ENCODE measurements at regions of chr3 and their contacts with region 1.

Region 1: DNA sequence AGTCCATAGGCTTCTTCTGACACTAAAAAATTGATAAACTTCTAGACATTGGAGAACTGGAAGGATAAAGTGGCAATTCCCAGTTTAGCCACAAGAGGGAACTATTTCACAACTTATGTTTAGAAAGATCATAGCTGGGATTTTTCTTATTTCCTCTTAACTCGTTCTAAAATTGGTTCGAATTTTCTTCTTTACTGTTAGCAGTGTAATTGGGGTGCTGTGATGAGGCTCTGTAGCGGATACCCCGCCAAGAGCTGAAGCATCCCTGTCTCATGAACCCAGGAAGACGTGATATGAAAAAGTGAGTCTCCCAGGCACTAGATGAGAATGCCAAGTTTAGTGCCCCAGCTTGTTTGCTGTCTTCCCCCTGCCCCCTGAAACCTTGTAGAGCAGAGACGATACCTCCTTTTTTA is 85.1 kb downstream of the PDCD6IP start:
- DNase-seq: no peak
- ATAC-seq: peak; percentile 27
- H3K4me3 Mint-ChIP-seq: peak overlapping the region; percentile 62
- H3K27ac Mint-ChIP-seq: no peak overlapping the region
- H3K4me1 Mint-ChIP-seq: peaks cover 36% of the 10 kb centered on the region
- H3K27me3 Mint-ChIP-seq: no peaks in the 10 kb centered on the region
- CTCF ChIP-seq: peak; percentile 72

Region 2: DNA sequence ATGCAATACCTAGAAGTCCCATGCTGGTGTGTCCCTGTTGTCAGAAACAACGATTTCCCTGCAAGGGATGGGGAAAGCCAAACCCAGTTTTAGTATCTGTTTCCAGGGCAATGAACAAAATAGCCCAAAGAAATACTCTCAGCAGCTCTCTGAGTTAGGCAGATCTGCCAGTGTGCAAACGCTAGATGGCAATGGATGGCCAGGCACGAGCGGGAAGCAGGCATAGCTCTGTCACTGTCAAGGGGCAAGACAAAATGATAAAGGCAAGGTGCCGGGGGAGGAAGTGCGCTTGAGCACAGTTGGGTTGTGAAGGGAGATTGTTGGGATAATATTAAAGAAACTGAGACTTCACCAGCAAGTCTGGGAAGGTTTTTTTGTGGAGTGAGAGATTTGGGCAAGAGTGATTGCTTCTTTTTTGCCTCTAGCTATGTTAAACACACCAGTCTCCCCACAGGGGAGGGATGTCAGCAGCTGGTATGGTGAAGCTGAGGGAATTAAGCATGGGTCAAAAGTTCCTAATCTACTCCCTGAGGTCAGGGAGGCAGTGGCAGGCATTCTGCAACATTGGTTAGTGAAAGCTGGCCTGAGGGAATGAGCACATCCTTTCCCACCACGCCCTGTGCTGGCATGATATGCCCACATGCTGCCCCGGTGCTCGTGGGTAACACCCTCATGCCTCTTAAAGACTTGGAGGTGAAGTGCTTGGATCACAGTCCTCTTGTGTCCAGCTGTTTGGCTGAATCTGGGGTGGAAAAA is 32.4 kb after region 1 on chr3:
- CTCF ChIA-PET with region 1: interaction called, 30 read pairs
- POLR2A ChIA-PET with region 1: no interaction called
- DNase-seq: peak; percentile 25
- ATAC-seq: peak; percentile 73
- H3K4me3 Mint-ChIP-seq: no peak overlapping the region
- H3K27ac Mint-ChIP-seq: no peak overlapping the region
- H3K4me1 Mint-ChIP-seq: peaks cover 17% of the 10 kb centered on the region
- H3K27me3 Mint-ChIP-seq: no peaks in the 10 kb centered on the region
- CTCF ChIP-seq: no peak

Region 3: DNA sequence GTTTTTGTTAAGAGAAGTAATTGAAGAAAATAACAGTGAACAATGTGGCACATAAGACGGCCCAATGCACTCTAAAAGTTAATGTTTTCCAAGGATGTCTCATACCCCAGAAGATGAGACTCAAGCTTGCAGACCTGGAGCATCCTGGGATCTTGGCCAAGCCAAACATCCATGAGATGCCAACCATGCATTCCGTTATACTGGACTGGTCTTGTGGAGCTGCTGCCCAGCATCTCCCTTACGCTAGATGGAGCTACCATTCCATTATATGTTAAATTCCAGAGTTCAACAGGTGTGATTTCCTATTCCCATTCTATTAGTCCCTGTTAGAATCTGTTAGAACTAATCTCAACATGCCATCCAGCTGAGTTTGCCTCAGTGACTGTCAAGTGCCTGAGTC is 96.7 kb after region 1 on chr3:
- CTCF ChIA-PET with region 1: interaction called, 10 read pairs
- POLR2A ChIA-PET with region 1: no interaction called
- DNase-seq: no peak
- ATAC-seq: peak; percentile 88
- H3K4me3 Mint-ChIP-seq: no peak overlapping the region
- H3K27ac Mint-ChIP-seq: no peak overlapping the region
- H3K4me1 Mint-ChIP-seq: no peaks in the 10 kb centered on the region
- H3K27me3 Mint-ChIP-seq: no peaks in the 10 kb centered on the region; the same call in 1 of the 2 replicates
- CTCF ChIP-seq: 0 out of 2 replicates have a peak, but pooled peaks have one; percentile 22

Region 4: DNA sequence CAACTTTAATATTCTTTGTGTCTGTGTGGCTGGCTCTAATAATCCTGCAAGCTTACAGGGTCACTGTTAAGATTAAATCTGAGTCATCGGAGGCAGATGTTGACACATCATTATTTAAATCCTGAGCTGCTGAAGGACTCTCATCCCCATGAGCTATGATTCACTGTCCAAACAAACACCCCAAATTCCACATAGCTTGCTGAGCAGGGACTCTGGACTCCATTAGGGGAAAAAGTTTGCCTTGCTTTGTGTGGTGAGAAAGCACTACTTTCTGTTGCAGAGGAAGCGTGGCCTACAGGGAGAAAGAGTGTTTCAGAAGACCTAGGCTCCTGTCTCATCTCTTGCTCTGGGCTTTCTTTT is 128.5 kb after region 1 on chr3:
- CTCF ChIA-PET with region 1: interaction called, 83 read pairs
- POLR2A ChIA-PET with region 1: no interaction called
- DNase-seq: no peak
- ATAC-seq: no peak
- H3K4me3 Mint-ChIP-seq: no peak overlapping the region
- H3K27ac Mint-ChIP-seq: no peak overlapping the region
- H3K4me1 Mint-ChIP-seq: peaks cover 18% of the 10 kb centered on the region
- H3K27me3 Mint-ChIP-seq: no peaks in the 10 kb centered on the region
- CTCF ChIP-seq: no peak

Region 5: DNA sequence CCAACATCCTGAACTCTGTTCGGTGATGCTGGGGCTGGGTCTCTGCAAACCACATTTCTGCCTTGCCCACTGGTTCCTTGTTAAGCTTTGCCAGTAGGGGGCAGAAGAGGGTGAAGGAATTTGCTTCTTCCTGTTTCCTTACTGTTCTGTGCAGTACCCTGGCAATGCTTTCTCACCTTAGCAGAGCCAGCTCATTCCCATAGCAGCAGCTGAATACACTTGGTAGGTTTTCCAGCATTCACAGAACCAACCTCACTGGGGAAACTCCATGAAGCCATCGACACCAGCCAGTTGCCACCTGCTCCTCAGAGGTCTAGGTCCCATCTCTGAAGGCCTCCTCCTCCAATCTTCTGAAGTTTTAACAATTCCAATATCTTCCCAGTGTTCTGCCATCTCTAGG is 223.3 kb after region 1 on chr3:
- CTCF ChIA-PET with region 1: interaction called, 12 read pairs
- POLR2A ChIA-PET with region 1: no interaction called
- DNase-seq: peak; percentile 61
- ATAC-seq: peak; percentile 96
- H3K4me3 Mint-ChIP-seq: no peak overlapping the region
- H3K27ac Mint-ChIP-seq: no peak overlapping the region
- H3K4me1 Mint-ChIP-seq: no peaks in the 10 kb centered on the region
- H3K27me3 Mint-ChIP-seq: no peaks in the 10 kb centered on the region
- CTCF ChIP-seq: peak; percentile 68

Region 6: DNA sequence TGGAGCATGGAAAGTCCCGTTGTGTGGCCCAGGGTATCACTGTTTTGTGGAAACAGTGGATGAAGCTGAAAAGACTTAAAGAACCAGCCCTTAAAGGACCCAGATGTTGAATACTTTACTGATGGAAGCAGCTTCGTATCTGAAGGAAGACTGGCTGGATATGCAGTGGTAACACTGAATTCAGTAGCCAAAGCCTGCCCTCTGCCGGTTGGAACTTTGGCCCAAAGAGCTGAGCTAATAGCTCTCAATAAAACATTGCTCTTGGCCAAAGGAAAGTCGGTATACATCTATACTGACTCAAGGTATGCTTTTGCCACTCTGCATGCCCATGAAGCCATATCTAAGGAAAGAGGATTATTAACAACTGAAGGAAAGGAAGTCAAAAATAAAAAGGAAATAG is 800.3 kb after region 1 on chr3:
- CTCF ChIA-PET with region 1: interaction called, 20 read pairs
- POLR2A ChIA-PET with region 1: no interaction called
- DNase-seq: peak; percentile 82
- ATAC-seq: peak; percentile 82
- H3K4me3 Mint-ChIP-seq: no peak overlapping the region
- H3K27ac Mint-ChIP-seq: no peak overlapping the region
- H3K4me1 Mint-ChIP-seq: no peaks in the 10 kb centered on the region
- H3K27me3 Mint-ChIP-seq: no peaks in the 10 kb centered on the region; the same call in 1 of the 2 replicates
- CTCF ChIP-seq: peak; percentile 44

Measured in WTC11 (cell line).